ENCODE measurements at regions of chr9 and their contacts with region 1.

Region 1: DNA sequence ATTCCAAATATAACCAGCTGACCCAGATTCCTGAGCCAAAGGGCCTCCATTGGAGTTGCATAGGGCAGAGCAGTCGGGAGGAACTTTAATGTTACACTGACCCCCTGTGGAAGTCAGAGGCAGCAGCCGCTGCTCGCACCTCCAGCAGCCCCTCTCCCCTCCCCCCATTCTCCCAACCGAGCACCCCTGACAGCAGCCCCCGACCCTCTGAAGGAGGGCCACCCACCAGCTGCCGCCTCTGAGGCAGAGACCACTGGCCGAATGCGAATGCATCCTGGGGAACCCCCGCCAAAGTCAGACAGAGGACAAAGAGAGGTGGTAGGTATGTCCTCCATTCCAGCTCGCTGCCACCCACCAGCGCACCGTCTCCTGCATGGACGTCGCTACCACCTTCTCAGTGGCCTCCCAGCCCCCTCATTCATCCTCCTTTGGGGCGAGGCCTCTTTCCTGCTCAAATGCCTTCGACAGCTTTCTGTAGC is 231.0 kb downstream of the CDK5RAP2 start:
- DNase-seq: peak; percentile 85
- H3K4me3 ChIP-seq: no peak overlapping the region; a peak in 1 of 4 replicates
- H3K27ac ChIP-seq: no peak overlapping the region
- H3K4me1 ChIP-seq: peaks cover 0 to 6% of the 10 kb centered on the region in 2 experiments; a peak in 1 of 4 replicates
- H3K27me3 ChIP-seq: no peaks in the 10 kb centered on the region
- CTCF ChIP-seq: peak; percentile 74
- EP300 ChIP-seq: no peak
- RAD21 ChIP-seq: peak; percentile 89

Region 2: GRCh38 chr9:119370816-119371215 is 978.2 kb before region 1 on chr9:
- CTCF ChIA-PET with region 1: interaction called, 15 read pairs
- POLR2A ChIA-PET with region 1: no interaction called
- DNase-seq: no peak
- H3K4me3 ChIP-seq: no peak overlapping the region
- H3K27ac ChIP-seq: no peak overlapping the region
- H3K4me1 ChIP-seq: peaks cover 0 to 10% of the 10 kb centered on the region in 2 experiments; a peak in 1 of 4 replicates
- H3K27me3 ChIP-seq: peaks cover 9% of the 10 kb centered on the region; the same call in 1 of the 2 replicates
- CTCF ChIP-seq: no peak
- EP300 ChIP-seq: no peak
- RAD21 ChIP-seq: no peak

Region 3: GRCh38 chr9:119544492-119545249 is 804.3 kb before region 1 on chr9:
- CTCF ChIA-PET with region 1: interaction called, 11 read pairs
- POLR2A ChIA-PET with region 1: no interaction called
- DNase-seq: no peak
- H3K4me3 ChIP-seq: no peak overlapping the region
- H3K27ac ChIP-seq: no peak overlapping the region
- H3K4me1 ChIP-seq: no peaks in the 10 kb centered on the region
- H3K27me3 ChIP-seq: no peaks in the 10 kb centered on the region
- CTCF ChIP-seq: no peak
- EP300 ChIP-seq: no peak
- RAD21 ChIP-seq: no peak

Region 4: GRCh38 chr9:119968836-119969707 is 379.9 kb before region 1 on chr9:
- CTCF ChIA-PET with region 1: interaction called, 10 read pairs
- POLR2A ChIA-PET with region 1: no interaction called
- DNase-seq: peak; percentile 76
- H3K4me3 ChIP-seq: no peak overlapping the region; a peak in 1 of 4 replicates
- H3K27ac ChIP-seq: no peak overlapping the region
- H3K4me1 ChIP-seq: no peaks in the 10 kb centered on the region; a peak in 1 of 4 replicates
- H3K27me3 ChIP-seq: no peaks in the 10 kb centered on the region
- CTCF ChIP-seq: peak; percentile 94
- EP300 ChIP-seq: no peak
- RAD21 ChIP-seq: peak; percentile 86

Region 5: GRCh38 chr9:120324996-120325642 is 23.9 kb before region 1 on chr9:
- CTCF ChIA-PET with region 1: interaction called, 10 read pairs
- POLR2A ChIA-PET with region 1: no interaction called
- DNase-seq: peak; percentile 55
- H3K4me3 ChIP-seq: no peak overlapping the region
- H3K27ac ChIP-seq: peak overlapping the region in 1 of 2 experiments; percentile 92; a peak in 2 of 4 replicates
- H3K4me1 ChIP-seq: peaks cover 0 to 19% of the 10 kb centered on the region in 2 experiments; a peak in 2 of 4 replicates
- H3K27me3 ChIP-seq: no peaks in the 10 kb centered on the region
- CTCF ChIP-seq: peak; percentile 15; the same call in 1 of the 2 replicates
- EP300 ChIP-seq: 0 out of 4 replicates have a peak, but pooled peaks of 1 of the 2 experiments have one; percentile 32
- RAD21 ChIP-seq: peak; percentile 25; the same call in 1 of the 2 replicates

Region 6: GRCh38 chr9:120477521-120478001 is 128.6 kb after region 1 on chr9:
- CTCF ChIA-PET with region 1: interaction called, 14 read pairs
- POLR2A ChIA-PET with region 1: no interaction called
- DNase-seq: peak; percentile 64
- H3K4me3 ChIP-seq: peak overlapping the region in 1 of 2 experiments; percentile 4; a peak in 1 of 4 replicates
- H3K27ac ChIP-seq: no peak overlapping the region
- H3K4me1 ChIP-seq: peaks cover 11 to 12% of the 10 kb centered on the region in 2 experiments; a peak in 2 of 4 replicates
- H3K27me3 ChIP-seq: no peaks in the 10 kb centered on the region
- CTCF ChIP-seq: peak; percentile 99
- EP300 ChIP-seq: no peak
- RAD21 ChIP-seq: peak; percentile 86

Region 7: DNA sequence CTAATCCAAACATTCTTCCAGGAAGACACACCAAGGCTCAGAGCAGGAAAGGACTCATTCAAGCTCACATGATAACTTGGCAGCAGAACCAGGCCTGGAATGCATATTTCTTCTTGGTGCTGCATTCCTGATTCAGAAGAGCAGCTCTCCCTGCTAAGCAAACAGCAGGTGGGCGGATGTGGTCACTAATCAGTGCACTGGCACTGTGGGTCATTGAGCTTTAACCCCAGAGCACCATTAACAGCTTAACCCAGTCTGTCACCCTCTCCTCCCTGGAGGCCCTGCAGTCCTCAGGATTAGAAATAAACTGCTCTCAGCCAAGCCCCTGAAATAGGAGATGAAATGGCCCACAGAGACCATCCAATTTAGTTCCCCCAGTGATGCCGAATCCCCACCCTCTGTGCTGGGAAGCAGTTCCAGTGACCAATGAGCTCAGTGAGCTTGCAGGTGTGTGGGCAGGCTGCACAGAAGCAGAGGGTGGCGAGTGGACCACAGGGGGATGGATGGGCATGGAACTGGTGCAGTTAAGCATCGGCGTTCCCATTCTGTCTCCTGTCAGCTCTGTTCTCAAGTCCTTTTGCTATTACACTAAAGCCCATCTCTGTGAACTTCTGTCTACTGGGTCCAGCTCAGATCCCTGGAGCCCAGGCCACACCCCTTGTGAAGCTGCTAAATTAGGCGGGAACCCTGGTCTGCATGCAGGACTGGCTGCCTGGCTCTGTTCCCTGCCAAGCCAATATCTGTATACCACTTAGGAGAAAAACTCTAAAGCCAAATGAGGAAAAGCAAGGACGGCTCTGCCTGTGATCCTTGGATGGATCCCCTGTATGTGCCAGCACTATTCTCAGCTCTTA is 381.9 kb after region 1 on chr9:
- CTCF ChIA-PET with region 1: no interaction called
- POLR2A ChIA-PET with region 1: no interaction called
- DNase-seq: no peak
- H3K4me3 ChIP-seq: no peak overlapping the region
- H3K27ac ChIP-seq: no peak overlapping the region
- H3K4me1 ChIP-seq: peaks cover 0 to 14% of the 10 kb centered on the region in 2 experiments; a peak in 1 of 4 replicates
- H3K27me3 ChIP-seq: no peaks in the 10 kb centered on the region
- CTCF ChIP-seq: no peak
- EP300 ChIP-seq: no peak
- RAD21 ChIP-seq: no peak